Breast epithelium (tissue), 4 donors: ENCODE measurements at regions of chr17 and their contacts with region 1.

Region 1: GRCh38 chr17:1783834-1784611 is 22.2 kb downstream of the SERPINF1 start:
- DNase-seq: peak in 1 of 2 donors; percentile 87
- H3K4me3 ChIP-seq: peak overlapping the region in 2 of 3 donors; percentile 20 to 54
- H3K27ac ChIP-seq: peak overlapping the region; percentile 93 to 95
- H3K4me1 ChIP-seq: peaks cover 0 to 9% of the 10 kb centered on the region in 2 donors
- H3K27me3 ChIP-seq: no peaks in the 10 kb centered on the region
- CTCF ChIP-seq: peak; percentile 46 to 94 (median 81)
- POLR2A ChIP-seq: no peak

Region 2: GRCh38 chr17:1762901-1763898 is 20.8 kb before region 1 on chr17:
- intact Hi-C with region 1: loop called (anchors 1 kb)
- DNase-seq: no peak
- H3K4me3 ChIP-seq: peak overlapping the region; percentile 59 to 73 (median 70)
- H3K27ac ChIP-seq: peak overlapping the region; percentile 87 to 95
- H3K4me1 ChIP-seq: no peaks in the 10 kb centered on the region
- H3K27me3 ChIP-seq: no peaks in the 10 kb centered on the region
- CTCF ChIP-seq: no peak
- POLR2A ChIP-seq: no peak